AG04449 (cell line): ENCODE measurements at regions of chr12 and their contacts with region 1.

Region 1: GRCh38 chr12:80412369-80412953 is 31.6 kb upstream of the PTPRQ start:
- DNase-seq: no peak
- H3K4me3 ChIP-seq: no peak overlapping the region
- CTCF ChIP-seq: peak; percentile 38

Region 2: DNA sequence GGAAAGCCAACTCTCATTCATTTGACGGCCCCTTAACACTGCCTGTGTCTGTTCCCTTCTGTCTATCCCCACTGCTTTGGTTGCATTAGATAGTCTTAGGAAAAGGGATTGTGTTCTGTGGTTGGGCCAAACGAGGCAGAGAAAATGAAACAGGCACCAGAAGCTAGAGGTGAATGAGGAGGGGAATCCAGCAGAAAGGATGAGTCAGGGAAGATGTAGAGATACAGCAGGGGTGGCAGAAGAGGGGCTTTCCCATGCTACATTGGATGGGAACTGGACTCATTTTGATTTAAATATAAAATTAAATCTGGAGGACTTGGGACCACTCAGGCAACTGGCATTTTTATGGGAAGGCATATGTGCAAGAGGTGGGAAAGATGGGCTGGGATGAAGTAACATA is 269.8 kb before region 1 on chr12:
- CTCF ChIA-PET with region 1: no interaction called
- POLR2A ChIA-PET with region 1: no interaction called
- DNase-seq: no peak
- H3K4me3 ChIP-seq: no peak overlapping the region
- CTCF ChIP-seq: no peak

Region 3: DNA sequence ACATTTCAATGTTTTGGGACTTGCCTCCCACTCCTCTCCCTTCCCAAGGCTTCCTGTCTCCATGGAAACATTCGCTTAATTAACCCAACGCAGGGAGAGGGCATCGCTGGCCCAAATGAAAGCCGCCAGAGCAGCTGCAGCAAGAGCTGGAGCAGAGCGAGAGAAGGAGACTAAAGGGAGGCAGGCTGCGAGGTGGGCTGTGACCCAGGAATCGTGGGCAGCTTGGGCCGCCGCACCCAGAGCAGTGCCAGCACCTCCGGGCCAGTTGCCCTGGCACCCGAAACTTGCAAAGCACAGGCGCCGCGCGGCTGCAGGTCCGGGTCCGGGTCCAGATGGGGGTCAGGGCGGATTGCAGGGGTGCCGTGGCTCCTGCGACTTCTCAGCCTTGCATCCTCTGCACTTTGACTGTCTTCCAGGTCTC is 11.9 kb before region 1 on chr12:
- CTCF ChIA-PET with region 1: interaction called, 12 read pairs
- POLR2A ChIA-PET with region 1: no interaction called
- DNase-seq: no peak
- H3K4me3 ChIP-seq: peak overlapping the region; percentile 51
- CTCF ChIP-seq: no peak

Region 4: DNA sequence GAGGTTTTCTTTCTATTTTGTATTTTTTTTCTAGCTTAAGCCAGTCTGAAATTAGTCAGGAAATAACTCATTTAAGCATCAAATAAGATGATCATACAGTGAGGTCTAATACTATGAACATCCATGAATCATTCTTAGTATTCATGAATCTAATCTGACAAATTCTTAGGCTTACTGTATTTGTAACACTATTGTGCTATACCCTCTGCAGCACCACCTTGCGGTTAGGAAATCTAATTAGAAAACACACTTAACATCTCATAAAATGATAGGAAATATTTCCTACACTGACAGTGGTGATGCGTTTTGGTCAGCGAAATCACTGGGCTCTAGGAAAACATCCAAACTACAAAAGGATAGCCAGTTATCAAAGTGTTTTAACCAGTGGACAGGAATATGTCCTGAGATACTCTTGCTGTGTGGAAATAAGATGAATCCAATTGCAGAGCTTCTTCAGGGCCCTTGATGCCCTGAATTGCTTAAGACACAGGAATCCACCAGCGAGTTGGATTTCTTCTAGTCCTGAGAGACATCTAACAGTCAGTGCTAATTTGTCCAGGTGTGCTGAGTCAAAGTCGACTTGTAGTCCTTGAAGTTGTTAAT is 185.6 kb after region 1 on chr12:
- CTCF ChIA-PET with region 1: interaction called, 21 read pairs
- POLR2A ChIA-PET with region 1: no interaction called
- DNase-seq: peak; percentile 33
- H3K4me3 ChIP-seq: no peak overlapping the region
- CTCF ChIP-seq: peak; percentile 24

Region 5: DNA sequence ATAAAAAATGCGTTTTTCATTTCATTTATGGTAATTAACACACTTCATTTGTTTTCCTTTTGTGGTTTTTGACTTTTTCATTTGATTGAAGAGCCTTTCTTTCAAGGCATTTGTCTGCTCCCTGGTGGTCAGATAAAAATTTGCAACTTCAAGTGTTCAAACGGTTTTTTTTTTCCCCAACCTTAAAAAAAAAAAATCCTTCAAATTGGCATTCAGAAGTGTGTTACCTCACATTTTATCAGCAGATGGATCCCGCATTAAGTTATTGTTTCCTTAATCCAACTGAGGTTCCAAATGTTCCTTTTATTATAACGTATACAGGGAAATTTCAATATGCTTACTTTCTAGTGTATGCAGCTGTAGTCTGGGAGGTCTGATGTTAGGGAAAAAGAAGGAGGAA is 351.4 kb after region 1 on chr12:
- CTCF ChIA-PET with region 1: interaction called, 24 read pairs
- POLR2A ChIA-PET with region 1: no interaction called
- DNase-seq: no peak
- H3K4me3 ChIP-seq: no peak overlapping the region
- CTCF ChIP-seq: peak; percentile 22

Region 6: GRCh38 chr12:80778005-80778541 is 365.6 kb after region 1 on chr12:
- CTCF ChIA-PET with region 1: interaction called, 11 read pairs
- POLR2A ChIA-PET with region 1: no interaction called
- DNase-seq: peak; percentile 77
- H3K4me3 ChIP-seq: no peak overlapping the region
- CTCF ChIP-seq: no peak